ENCODE measurements at regions of chr4 and their contacts with region 1.

Region 1: DNA sequence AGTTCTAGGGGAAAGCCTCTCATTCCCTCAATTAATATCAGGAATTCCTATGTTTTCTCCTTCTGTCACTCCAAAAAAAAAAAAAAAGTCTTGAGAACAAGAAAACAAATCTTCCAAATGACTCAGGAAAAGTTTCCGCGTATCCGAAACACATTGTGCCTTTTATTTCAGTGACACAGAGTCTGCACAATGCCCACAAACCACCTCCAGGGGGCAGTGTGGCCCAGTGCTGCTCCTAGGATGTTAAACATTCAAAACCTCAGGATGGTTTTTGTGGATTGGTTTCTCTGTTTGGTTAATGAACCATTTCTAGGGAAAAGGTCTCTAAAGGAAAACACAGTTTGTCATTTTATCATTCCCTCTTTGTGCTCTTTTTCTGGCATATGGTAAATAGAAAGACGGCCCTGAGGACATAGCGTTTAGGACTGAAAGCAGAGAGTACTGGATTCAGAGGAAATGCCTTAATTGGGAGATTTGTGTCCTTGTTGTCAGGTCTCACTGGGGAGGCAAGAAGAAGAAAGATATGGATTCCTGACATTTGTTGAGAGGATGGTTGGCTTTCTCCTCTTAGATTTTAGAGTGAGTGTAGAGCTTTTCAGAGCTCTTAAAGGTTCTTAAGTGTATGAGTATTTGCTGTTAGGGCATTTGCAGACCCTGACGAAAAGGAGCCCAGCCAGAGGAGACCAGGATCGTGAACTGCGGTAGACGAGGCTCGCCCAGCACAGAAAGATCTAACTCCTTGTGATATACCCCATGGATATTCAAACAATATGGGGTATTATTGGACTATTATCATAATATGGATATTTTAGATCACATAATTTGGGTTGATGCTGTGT is 65.7 kb upstream of the MAP9 start:
- H3K4me3 Mint-ChIP-seq: peak overlapping the region; percentile 34
- H3K27ac Mint-ChIP-seq: no peak overlapping the region
- H3K4me1 Mint-ChIP-seq: peaks cover 7% of the 10 kb centered on the region
- H3K27me3 Mint-ChIP-seq: peaks cover 7% of the 10 kb centered on the region

Region 2: DNA sequence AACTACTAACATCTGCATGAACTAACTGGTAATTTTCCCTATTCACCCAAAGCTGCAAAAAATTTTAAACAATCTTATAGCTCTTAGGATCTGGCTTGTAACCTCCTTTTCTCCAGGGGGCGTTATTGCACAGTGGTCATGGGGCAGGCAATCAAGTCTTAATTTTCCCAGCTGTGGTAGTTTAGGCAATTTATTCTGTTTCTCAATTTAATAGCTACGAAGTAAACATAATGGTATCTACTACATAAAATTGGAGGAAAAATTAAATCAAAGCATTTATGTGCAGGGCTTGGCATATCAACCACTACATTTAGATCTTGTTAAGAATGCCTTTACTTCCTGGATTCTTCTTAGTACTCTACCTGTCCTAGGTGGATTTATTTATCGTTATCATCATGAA is 86.8 kb after region 1 on chr4:
- intact Hi-C with region 1: loop called (anchors 5 kb)
- H3K4me3 Mint-ChIP-seq: no peak overlapping the region
- H3K27ac Mint-ChIP-seq: no peak overlapping the region
- H3K4me1 Mint-ChIP-seq: no peaks in the 10 kb centered on the region
- H3K27me3 Mint-ChIP-seq: no peaks in the 10 kb centered on the region

Region 3: DNA sequence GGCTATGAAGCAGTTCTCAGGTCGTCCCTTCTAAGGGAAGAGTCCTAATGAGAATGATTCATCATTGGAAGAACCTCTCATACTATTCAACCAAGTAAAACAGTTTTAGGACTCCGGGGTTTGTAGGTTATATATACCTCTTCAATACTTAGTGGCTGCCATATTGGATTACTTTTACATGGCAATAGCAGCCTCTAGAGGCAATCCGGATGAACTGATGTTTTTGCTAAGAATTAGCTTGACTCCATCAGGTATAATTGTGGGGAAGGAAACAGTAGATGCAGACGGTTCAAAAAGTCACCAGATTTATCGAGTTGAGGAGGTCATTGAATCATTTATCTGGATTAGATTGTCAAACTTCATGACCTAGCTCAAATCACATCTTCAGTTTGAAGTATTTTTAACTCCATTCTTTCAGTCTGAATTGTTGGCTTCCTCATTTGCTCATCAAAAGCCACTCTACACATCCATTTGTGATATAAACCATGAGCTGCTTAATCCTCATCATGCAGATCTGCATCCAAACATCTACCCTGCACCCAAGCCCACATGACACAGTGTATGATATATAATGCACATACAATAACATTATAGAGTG is 344.7 kb after region 1 on chr4:
- intact Hi-C with region 1: loop called (anchors 1 kb)
- H3K4me3 Mint-ChIP-seq: no peak overlapping the region
- H3K27ac Mint-ChIP-seq: no peak overlapping the region
- H3K4me1 Mint-ChIP-seq: no peaks in the 10 kb centered on the region
- H3K27me3 Mint-ChIP-seq: no peaks in the 10 kb centered on the region

Region 4: DNA sequence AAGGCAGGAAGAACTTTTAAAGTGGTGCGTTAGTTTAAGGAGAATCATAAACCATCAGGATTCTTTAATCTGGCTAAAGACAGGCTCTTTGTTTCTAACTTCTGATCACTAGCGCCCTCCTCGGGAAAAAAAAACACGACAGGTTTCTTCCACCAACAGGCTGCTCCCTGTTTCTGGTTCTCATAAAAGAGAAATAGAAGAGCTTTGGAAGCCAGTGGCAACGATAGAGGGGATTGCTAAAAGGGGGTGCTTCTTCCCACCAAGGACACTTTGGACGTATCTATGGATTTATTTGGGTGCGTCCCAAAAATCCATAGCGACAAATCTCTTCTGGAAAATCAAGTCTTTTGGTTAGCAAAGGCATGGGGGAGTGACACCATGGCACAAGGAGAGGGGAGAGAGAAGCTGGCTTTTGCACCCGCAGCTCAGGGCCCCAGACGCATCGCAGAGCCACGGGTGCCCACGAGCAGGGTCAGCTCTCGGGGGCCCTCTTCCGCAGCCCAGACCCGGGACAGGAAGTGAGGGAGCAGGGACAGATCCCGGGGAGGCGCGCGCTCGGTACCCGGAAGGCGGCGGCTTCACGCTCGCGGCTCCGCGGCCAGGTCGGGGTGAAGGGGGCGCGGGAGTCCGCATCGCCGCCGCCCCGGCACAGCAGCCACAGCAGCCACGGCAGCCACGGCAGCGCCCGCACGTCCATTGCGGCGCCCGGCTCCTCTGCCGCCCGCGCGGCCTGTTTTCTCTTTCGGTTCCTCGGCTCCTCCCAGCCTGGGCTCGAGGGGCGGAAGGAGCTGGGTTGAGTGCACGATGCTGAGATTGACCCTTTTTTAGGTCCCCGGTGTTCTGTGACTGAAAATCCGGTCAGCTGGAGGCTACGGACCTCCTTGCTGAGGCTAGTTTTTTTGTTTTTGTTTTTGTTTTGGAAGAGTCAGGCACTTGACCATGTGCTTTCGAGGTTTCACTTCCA is 510.9 kb after region 1 on chr4 and contains the start of gene CTSO:
- intact Hi-C with region 1: loop called (anchors 5 kb)
- H3K4me3 Mint-ChIP-seq: peak within 1 kb of the TSS; percentile 90
- H3K27ac Mint-ChIP-seq: peak within 1 kb of the TSS; percentile 92
- H3K4me1 Mint-ChIP-seq: peaks cover 5% of the 10 kb centered on the region
- H3K27me3 Mint-ChIP-seq: no peaks in the 10 kb centered on the region